Left cardiac atrium (tissue), 4 donors: ENCODE measurements at regions of chr2 and their contacts with region 1.

Region 1: DNA sequence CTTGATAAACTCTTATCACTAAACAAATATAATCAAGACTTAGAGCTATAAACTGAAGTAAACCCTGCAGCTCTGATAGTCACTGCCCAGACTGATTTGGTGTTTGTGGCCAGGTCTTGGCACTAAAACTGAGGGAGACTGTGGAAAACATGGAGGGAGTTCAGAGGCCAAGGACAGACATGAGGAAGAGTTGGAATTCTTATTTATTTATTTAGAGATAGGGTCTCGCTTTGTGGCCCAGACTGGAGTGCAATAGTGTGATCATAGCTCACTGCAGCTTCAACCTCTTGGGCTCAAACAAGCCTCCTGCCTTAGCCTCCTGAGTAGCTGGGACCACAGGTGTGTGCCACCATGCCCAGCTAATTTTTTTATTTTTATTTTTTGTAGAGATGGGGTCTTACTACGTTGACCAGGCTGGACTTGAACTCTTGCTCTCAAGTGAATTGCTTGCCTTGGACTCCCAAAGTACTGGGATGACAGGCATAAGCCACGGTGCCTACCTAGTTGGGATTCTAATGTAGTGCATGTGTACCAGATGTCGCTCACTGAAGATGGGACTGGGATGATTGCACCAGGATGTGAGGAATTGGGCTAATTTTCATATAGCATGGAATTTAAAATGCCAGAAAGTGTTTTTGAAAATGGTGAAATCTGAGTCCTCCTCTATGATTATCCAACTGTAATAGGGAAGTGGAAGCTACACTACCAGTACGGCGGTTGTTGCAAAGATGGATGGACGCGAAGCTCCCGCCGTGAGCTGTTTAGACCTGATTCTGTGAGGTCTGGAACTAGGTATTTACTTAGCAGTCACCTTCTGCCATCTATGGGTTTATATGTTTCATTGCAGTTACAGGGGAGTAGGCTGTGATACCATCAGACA is 52.7 kb upstream of the CTLA4 start:
- DNase-seq: peak; percentile 53
- ATAC-seq: peak; percentile 85 to 88

Region 2: GRCh38 chr2:203484266-203485112 is 330.4 kb before region 1 on chr2:
- intact Hi-C with region 1: loop called (anchors 2 to 10 kb)
- DNase-seq: no peak
- ATAC-seq: peak; percentile 84 to 92